Left cardiac atrium (tissue), 4 donors: ENCODE measurements at regions of chr19 and their contacts with region 1.

Region 1: DNA sequence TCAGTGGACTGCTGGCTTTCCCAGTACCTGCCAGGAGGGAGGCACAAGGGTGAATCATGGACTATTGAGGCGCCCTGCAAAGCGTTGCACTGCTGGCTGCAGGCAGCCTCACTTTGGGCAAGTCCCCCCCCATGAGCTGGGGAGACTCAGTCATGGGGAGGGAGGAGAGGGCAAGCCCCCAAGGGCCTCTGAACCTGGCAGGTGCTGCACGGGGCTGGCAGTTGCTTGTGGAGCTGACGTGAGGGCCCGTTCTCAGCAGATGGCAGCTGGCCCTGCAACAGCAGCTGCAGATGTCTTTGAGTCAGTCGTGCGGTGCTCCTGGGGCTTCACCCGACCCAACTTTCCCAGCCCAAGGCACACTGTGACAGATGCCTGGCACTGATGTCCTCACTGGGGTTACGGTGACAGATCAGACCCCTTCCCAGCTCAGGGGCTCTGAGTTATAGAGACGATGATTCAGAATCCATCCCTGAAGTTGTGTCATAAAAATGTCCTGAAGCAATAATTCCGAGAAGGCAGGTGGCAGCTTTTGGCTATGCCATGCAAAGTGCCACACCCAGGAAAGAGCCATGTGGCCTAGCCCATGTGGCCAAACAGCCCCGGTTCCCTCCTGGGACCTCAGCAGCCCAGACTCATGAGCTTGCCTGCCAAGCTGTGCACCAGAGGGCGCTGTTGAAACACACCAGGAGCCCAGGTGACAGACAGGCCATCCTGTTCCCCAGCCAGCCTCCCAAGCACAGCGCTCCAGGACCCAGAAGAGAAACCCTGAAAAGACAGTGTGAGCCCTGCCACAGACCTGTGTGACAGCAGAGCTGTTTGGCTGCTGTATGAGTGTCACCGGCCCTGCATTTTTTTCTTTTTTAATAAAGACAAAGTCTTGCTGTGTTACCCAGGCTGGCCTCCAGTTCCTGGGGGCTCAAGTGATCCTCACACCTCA is 53.6 kb upstream of the LDLR start:
- DNase-seq: peak; percentile 94
- ATAC-seq: peak; percentile 92 to 95

Region 2: DNA sequence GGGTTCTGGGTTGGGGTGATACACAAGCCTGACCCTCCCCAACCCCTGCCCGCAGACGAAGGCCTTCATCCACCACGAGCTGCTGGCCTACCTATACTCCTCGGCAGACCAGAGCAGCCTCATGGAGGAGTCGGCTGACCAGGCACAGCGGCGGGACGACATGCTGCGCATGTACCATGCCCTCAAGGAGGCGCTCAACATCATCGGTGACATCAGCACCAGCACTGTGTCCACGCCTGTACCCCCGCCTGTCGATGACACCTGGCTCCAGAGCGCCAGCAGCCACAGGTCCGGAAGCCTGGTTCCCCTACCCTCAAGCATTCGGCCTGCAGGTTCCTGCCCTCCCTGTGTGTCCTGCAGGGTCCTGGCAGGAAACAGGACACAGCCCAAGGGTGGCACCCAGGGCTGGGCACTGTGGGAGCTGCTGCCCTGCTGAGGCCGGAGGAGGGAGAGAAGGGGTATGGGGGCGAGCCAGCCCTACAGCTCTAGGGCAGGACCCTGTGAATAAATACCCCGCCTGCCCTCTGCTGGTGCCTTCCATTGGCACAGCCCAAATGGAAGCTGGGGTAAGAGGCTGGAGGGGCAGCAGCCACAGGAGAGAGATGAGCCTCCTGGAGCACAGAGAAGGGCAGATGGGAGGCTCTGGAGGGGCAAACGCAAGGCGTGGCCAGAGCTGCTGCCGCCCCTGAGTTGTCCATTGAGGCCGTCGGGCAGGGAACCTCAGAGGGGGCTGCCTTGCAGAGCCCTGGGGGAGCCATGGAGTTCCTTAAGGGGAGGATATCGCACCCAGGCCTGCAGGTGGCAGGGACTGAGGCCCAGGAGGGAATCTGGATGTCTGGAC is 206.5 kb before region 1 on chr19:
- intact Hi-C with region 1: no loop called
- DNase-seq: no peak
- ATAC-seq: no peak

Region 3: GRCh38 chr19:11125994-11126685 is 90.4 kb after region 1 on chr19:
- intact Hi-C with region 1: loop called (anchors 2 to 5 kb)
- DNase-seq: peak; percentile 83
- ATAC-seq: peak; percentile 67 to 76